GM10248 (cell line): ENCODE measurements at regions of chr6 and their contacts with region 1.

Region 1: GRCh38 chr6:125906158-125906998 is 50.2 kb upstream of the HINT3 start:
- DNase-seq: peak; percentile 41
- CTCF ChIP-seq: peak; percentile 74

Region 2: DNA sequence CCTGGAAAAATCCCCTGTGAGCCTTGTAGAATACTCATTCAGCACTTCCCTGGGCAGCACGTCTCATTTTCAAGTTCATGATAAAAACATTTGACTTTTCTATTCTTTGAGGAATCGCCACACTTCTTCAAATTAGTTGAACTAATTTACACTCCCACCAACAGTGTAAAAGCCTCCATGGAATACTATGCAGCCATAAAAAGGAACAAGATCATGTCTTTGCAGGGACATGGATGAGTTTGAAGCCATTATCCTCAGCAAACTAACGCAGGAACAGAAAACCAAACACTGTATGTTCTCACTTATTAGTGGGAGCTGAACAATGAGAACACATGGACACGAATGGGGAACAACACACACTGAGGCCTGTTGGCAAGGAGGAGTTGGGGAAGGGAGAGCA is 259.0 kb before region 1 on chr6:
- CTCF ChIA-PET with region 1: no interaction called
- POLR2A ChIA-PET with region 1: no interaction called
- DNase-seq: no peak
- CTCF ChIP-seq: no peak

Region 3: GRCh38 chr6:125888989-125889656 is 17.3 kb before region 1 on chr6:
- CTCF ChIA-PET with region 1: interaction called, 20 read pairs
- POLR2A ChIA-PET with region 1: no interaction called
- DNase-seq: peak; percentile 15
- CTCF ChIP-seq: peak; percentile 36

Region 4: GRCh38 chr6:125918681-125919566 is 12.5 kb after region 1 on chr6:
- CTCF ChIA-PET with region 1: interaction called, 93 read pairs
- POLR2A ChIA-PET with region 1: no interaction called
- DNase-seq: peak; percentile 71
- CTCF ChIP-seq: no peak

Region 5: DNA sequence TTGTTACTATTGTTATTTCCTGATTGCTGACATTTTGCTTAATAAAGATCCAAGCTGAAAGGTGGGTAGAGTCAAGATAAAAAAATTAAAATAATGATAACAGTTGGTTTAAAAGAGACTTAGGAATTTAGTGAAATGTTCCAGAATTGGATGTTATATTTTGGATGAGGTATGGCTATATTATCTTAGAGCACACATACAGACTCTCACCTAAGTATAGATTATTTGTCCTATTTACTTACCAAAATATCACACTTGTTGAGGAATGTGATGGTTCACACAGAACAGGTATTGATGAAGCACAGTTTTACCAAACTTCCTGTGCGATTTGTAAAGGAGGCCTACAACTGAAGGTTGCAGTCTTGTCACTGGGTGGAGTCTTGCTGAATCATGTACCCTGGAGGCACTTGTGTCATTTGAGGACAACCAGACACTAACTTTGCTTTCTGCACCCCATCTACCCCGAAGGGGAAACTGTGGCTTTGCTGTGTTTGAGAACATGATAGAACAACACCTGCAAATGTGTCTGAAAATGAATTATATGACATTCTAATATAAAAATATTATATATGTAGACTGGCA is 17.7 kb after region 1 on chr6:
- CTCF ChIA-PET with region 1: interaction called, 93 read pairs
- POLR2A ChIA-PET with region 1: no interaction called
- DNase-seq: no peak
- CTCF ChIP-seq: no peak

Region 6: DNA sequence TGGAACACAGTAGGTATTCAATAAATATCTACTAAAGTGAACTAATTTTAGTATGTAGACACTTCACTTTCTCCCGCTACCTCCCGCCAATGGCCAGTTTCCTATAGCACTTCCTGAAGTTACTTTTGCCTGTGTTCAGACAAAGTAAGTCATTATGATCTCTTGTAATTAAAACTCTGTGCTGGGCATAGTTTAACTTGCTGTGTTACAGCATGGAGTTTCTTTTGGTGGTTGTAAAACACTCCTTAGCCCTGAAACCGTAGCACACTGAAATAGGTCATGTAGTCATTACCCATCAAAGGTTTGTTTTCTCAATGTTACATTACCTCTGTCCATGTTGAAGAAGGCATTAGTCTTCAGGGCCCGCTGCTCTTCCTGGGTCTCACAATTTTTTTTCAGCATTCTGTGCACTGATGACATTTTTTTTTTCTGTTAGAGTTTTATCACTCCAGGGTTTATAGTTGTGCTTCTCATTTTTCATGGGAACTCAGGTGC is 379.5 kb after region 1 on chr6:
- CTCF ChIA-PET with region 1: no interaction called
- POLR2A ChIA-PET with region 1: no interaction called
- DNase-seq: no peak
- CTCF ChIP-seq: no peak